ENCODE measurements at regions of chr12 and their contacts with region 1.

Region 1: DNA sequence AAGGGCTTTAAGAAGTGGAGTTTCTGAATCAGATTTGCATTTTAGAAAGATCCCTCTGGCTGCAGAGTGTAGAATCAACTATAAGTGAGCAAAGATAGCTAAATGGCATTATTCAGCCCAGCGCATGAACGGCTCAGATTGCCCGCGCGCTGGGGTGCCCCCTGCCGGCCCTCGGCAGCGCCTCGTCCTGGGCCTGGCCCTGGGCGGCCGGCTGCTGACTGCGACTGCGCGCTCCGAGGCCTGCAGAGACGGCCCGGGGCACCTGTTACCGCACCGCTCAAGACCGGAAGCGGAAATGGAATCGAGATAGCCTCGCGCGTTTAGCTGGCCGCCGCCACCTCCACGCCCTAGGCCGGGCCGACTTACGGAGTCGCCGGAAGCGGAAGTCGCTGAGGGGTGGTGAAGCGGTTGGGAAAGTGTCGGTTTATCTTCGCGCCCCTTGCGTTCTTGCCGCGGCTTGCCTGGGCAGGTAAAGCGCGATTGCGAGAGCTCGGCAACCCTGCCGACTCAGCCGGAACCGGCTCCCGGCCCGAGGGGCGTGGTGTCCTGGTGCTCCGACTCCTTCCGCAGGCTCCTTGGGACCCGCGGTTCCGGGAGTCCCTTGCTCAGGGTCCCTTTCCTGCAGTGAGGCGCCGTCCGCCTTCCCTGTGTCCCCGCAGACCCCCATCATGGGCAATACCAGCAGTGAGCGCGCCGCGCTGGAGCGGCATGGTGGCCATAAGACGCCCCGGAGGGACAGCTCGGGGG is at the start of gene PRKAB1:
- DNase-seq: peak; percentile 95 to 98 (median 97)
- ATAC-seq: peak; percentile 99 to 100 (median 100)
- H3K4me3 ChIP-seq: peak within 1 kb of the TSS; percentile 74 to 99 (median 96)
- H3K27ac ChIP-seq: peak within 1 kb of the TSS; percentile 84 to 98 (median 94)
- H3K4me1 ChIP-seq: peaks cover 4 to 45% (median 29%) of the 10 kb centered on the region in 12 donors
- H3K27me3 ChIP-seq: no peaks in the 10 kb centered on the region
- CTCF ChIP-seq: peak; percentile 85 to 99 (median 94)
- POLR2A ChIP-seq: peak in 1 of 2 donors; percentile 55
- total RNA-seq, gene PRKAB1: 8.5 to 19.1 (median 10.3) TPM

Region 2: GRCh38 chr12:118467641-118468305 is 1200.0 kb before region 1 on chr12:
- intact Hi-C with region 1: no loop called
- DNase-seq: no peak
- ATAC-seq: no peak
- H3K4me3 ChIP-seq: no peak overlapping the region
- H3K27ac ChIP-seq: no peak overlapping the region
- H3K4me1 ChIP-seq: no peaks in the 10 kb centered on the region
- H3K27me3 ChIP-seq: no peaks in the 10 kb centered on the region
- CTCF ChIP-seq: no peak
- POLR2A ChIP-seq: no peak

Region 3: DNA sequence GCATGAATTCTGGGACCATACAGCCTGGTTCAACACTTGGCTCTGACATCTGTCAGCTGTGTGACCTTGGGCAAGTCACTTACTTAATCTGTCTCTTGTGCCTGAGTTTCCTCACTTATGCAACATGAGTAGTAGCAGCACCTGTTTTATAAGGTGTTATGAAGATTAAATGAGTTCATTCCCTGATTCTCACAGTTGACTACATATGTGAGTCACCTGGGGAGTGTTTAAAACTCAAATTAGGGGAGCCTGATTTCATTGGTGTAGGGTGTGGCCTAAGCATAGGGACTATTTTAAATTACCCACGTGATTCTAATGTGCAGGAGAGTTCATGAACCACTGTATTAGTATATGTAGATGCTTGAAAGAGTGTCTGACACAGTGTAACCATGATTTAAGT is 110.9 kb before region 1 on chr12:
- intact Hi-C with region 1: no loop called
- DNase-seq: no peak
- ATAC-seq: no peak
- H3K4me3 ChIP-seq: no peak overlapping the region
- H3K27ac ChIP-seq: no peak overlapping the region
- H3K4me1 ChIP-seq: no peaks in the 10 kb centered on the region
- H3K27me3 ChIP-seq: peaks cover 0 to 5% (median 0%) of the 10 kb centered on the region in 9 donors
- CTCF ChIP-seq: no peak
- POLR2A ChIP-seq: no peak

Region 4: DNA sequence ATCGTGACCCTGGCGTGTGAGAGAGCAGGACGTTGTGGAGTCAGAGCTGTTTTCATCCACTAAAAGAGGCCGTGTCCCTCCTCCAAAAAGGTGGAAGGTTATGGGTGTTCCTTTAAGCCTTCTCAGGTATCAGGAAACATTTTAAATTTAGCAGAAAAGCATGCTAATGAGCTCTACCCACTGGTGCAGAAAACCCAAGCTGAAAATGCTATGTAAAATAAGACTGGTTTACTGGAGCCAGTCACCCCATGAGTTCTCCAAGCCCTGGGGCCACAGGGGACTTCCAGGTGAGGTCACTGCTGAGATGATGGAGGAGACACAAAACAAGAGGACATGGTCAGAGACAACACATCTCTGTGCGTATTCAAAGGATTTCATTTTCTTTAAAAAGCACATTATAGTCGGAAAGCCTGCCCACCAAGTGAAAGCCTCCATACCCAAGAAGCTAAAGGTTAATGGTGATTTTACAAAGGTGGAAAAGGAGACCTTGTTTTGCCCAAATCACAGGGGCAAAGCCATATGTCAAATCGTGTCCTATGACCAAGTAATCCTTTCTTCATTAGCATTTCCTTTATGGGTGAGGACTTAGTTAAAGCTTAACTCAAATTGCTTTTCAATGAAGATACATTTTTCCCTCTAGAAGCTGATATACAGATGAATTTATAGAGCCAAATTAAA is 14.3 kb after region 1 on chr12:
- intact Hi-C with region 1: no loop called
- DNase-seq: no peak
- ATAC-seq: no peak
- H3K4me3 ChIP-seq: no peak overlapping the region
- H3K27ac ChIP-seq: peak overlapping the region in 7 of 12 donors; percentile 4 to 75 (median 26)
- H3K4me1 ChIP-seq: peaks cover 0 to 46% (median 18%) of the 10 kb centered on the region in 12 donors
- H3K27me3 ChIP-seq: no peaks in the 10 kb centered on the region
- CTCF ChIP-seq: no peak
- POLR2A ChIP-seq: no peak

Region 5: GRCh38 chr12:119715268-119715620 is 47.5 kb after region 1 on chr12:
- intact Hi-C with region 1: loop called in 1 of 10 experiments (anchors 5 kb)
- DNase-seq: no peak
- ATAC-seq: no peak
- H3K4me3 ChIP-seq: no peak overlapping the region
- H3K27ac ChIP-seq: no peak overlapping the region
- H3K4me1 ChIP-seq: peaks cover 0 to 13% (median 7%) of the 10 kb centered on the region in 12 donors
- H3K27me3 ChIP-seq: no peaks in the 10 kb centered on the region
- CTCF ChIP-seq: no peak
- POLR2A ChIP-seq: no peak

Region 6: DNA sequence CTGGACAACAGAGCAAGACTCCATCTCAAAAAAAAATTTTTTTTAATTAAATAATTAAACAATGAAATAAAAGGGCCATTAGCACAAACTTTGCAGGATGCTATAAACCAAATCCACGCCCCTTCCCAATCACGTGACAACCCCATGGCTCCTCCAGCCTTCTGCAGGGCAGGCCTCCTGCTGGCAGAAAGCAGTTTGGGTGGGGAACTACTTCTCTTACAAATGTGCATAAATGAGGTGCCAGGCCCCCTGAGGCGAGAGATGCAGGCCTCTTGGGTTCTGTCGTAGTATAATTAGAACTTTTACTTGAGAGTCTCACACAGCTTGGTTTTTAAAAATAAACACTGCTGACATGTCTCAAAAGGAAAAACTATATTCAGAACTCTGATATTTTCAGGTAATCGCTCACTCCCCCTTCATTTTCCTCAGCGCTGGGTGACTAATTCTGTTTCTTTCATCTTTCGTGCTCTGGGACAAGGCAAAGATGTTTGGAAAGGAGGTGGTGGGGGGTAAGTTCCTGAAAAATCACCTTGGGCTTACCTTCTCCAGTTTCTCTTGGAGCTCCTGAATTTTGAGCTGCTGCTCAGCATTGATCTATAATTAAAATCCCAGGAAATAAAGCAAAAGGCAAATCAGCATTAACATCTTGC is 107.6 kb after region 1 on chr12:
- intact Hi-C with region 1: loop called in 8 of 10 experiments (anchors 2 to 10 kb)
- DNase-seq: no peak
- ATAC-seq: no peak
- H3K4me3 ChIP-seq: no peak overlapping the region
- H3K27ac ChIP-seq: no peak overlapping the region
- H3K4me1 ChIP-seq: no peaks in the 10 kb centered on the region
- H3K27me3 ChIP-seq: no peaks in the 10 kb centered on the region
- CTCF ChIP-seq: no peak
- POLR2A ChIP-seq: no peak

Region 7: GRCh38 chr12:119902084-119902509 is 234.3 kb after region 1 on chr12:
- intact Hi-C with region 1: loop called in 1 of 10 experiments (anchors 10 kb)
- DNase-seq: peak in 1 of 5 donors; percentile 50
- ATAC-seq: peak in 1 of 4 donors; percentile 34
- H3K4me3 ChIP-seq: no peak overlapping the region
- H3K27ac ChIP-seq: no peak overlapping the region
- H3K4me1 ChIP-seq: peaks cover 0 to 6% (median 0%) of the 10 kb centered on the region in 12 donors
- H3K27me3 ChIP-seq: peaks cover 0 to 6% (median 0%) of the 10 kb centered on the region in 9 donors
- CTCF ChIP-seq: peak; percentile 55 to 84 (median 72)
- POLR2A ChIP-seq: no peak